ENCODE measurements at regions of chr1 and their contacts with region 1.

Region 1: DNA sequence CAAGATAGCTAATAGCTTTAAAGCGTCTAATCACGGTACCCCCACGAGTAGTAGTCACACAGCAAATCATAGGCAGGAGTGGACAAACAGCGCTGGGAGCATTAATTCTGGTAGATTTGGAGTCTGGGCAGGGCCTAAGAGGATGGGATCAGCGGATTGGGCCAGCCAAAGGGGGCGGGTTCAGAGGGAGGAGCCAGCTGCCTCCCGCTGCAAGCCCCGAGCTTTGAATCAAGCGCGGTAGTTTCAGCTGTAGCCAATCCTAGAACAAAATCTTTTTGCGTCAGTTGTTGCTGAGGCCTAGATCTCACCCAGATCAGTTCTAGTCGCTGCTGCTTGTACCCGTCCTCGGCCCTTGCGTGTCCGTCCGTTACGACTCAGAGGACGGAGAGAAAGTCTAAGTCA is 576 bp upstream of the NASP start:
- DNase-seq: peak; percentile 96
- H3K4me3 Mint-ChIP-seq: peak overlapping the region; percentile 95
- H3K27ac Mint-ChIP-seq: peak overlapping the region; percentile 98
- H3K4me1 Mint-ChIP-seq: peaks cover 22% of the 10 kb centered on the region
- H3K27me3 Mint-ChIP-seq: no peaks in the 10 kb centered on the region

Region 2: GRCh38 chr1:45011837-45012638 is 571.2 kb before region 1 on chr1 and contains the start of gene UROD:
- CTCF ChIA-PET with region 1: no interaction called
- intact Hi-C with region 1: loop called (anchors 5 kb)
- DNase-seq: peak; percentile 96
- H3K4me3 Mint-ChIP-seq: peak within 1 kb of the TSS; percentile 81
- H3K27ac Mint-ChIP-seq: peak within 1 kb of the TSS; percentile 89
- H3K4me1 Mint-ChIP-seq: peaks cover 36% of the 10 kb centered on the region
- H3K27me3 Mint-ChIP-seq: no peaks in the 10 kb centered on the region
- total RNA-seq, gene UROD: 117 to 126 TPM

Region 3: DNA sequence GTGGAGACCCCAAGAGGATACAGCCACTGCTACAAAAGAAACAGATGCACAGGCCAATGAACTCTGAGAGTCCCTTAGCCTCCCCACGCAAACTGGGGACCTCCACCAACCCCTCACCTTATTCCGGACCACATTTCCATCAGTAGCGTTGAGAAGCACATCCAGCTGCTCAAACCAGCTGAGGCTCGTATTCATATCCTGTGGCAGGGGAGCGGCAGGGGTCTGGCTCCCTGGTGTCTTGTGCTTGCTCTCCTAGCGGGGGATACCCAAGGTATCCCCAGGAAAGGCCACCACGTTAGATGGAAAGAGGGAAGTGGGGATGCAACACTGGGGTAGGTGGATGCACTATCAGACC is 83.9 kb before region 1 on chr1:
- CTCF ChIA-PET with region 1: interaction called, 4 read pairs
- intact Hi-C with region 1: loop called (anchors 1 kb)
- DNase-seq: peak; percentile 30
- H3K4me3 Mint-ChIP-seq: peak overlapping the region; percentile 91
- H3K27ac Mint-ChIP-seq: peak overlapping the region; percentile 84
- H3K4me1 Mint-ChIP-seq: peaks cover 32% of the 10 kb centered on the region
- H3K27me3 Mint-ChIP-seq: no peaks in the 10 kb centered on the region

Region 4: GRCh38 chr1:45543581-45544417 is 39.5 kb before region 1 on chr1:
- CTCF ChIA-PET with region 1: no interaction called
- intact Hi-C with region 1: loop called (anchors 5 kb)
- DNase-seq: peak; percentile 90
- H3K4me3 Mint-ChIP-seq: peak overlapping the region; percentile 25
- H3K27ac Mint-ChIP-seq: peak overlapping the region; percentile 74
- H3K4me1 Mint-ChIP-seq: peaks cover 34% of the 10 kb centered on the region
- H3K27me3 Mint-ChIP-seq: no peaks in the 10 kb centered on the region

Region 5: DNA sequence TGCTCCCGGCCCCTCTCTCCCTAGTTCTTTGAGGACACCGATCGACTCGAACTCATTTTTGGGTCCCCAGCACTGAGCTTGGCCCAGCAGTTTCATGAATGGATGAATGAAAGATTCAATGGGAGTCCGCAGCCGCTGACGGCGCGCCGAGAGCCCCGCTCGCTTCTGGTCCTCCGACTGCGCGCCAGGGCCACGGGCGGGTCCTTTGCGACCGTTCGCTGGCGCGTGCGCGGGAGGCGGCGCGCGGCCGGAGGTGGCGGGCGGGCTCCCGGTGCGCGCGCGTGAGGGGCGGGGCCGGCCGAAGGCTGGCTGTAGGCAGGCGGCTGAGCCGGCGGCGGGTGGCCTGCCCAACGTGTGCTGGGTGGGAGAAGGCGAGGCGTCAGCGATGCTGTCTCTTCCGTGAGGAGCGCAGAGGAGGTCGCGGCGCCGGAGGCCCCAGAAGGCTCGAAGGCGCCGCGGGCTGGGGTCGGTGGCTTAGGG is 220.1 kb after region 1 on chr1 and contains the start of gene MAST2:
- CTCF ChIA-PET with region 1: no interaction called
- intact Hi-C with region 1: loop called (anchors 5 kb)
- DNase-seq: peak; percentile 84
- H3K4me3 Mint-ChIP-seq: peak within 1 kb of the TSS; percentile 86
- H3K27ac Mint-ChIP-seq: peak within 1 kb of the TSS; percentile 74
- H3K4me1 Mint-ChIP-seq: peaks cover 27% of the 10 kb centered on the region
- H3K27me3 Mint-ChIP-seq: no peaks in the 10 kb centered on the region
- total RNA-seq, gene MAST2: 21.7 to 22.1 TPM

Region 6: GRCh38 chr1:46179138-46180081 is 596.1 kb after region 1 on chr1:
- CTCF ChIA-PET with region 1: no interaction called
- intact Hi-C with region 1: loop called (anchors 10 kb)
- DNase-seq: peak; percentile 82
- H3K4me3 Mint-ChIP-seq: no peak overlapping the region
- H3K27ac Mint-ChIP-seq: no peak overlapping the region
- H3K4me1 Mint-ChIP-seq: peaks cover 8% of the 10 kb centered on the region
- H3K27me3 Mint-ChIP-seq: no peaks in the 10 kb centered on the region